ENCODE measurements at regions of chrX and their contacts with region 1.

Region 1: GRCh38 chrX:107627838-107628661 is at the start of gene PRPS1:
- DNase-seq: peak; percentile 75
- H3K4me3 ChIP-seq: peak within 1 kb of the TSS; percentile 81
- H3K27ac ChIP-seq: peak within 1 kb of the TSS; percentile 31
- H3K27me3 ChIP-seq: no peaks in the 10 kb centered on the region
- CTCF ChIP-seq: no peak
- polyA plus RNA-seq, gene PRPS1: 64.2 and 67.9 TPM in 2 replicates

Region 2: GRCh38 chrX:107465932-107466620 is 162.0 kb before region 1 on chrX:
- CTCF ChIA-PET with region 1: no interaction called
- POLR2A ChIA-PET with region 1: no interaction called
- DNase-seq: no peak
- H3K4me3 ChIP-seq: no peak overlapping the region
- H3K27ac ChIP-seq: no peak overlapping the region
- H3K27me3 ChIP-seq: no peaks in the 10 kb centered on the region
- CTCF ChIP-seq: no peak

Region 3: GRCh38 chrX:107537815-107538214 is 90.2 kb before region 1 on chrX:
- CTCF ChIA-PET with region 1: interaction called, 11 read pairs
- POLR2A ChIA-PET with region 1: no interaction called
- DNase-seq: no peak
- H3K4me3 ChIP-seq: no peak overlapping the region
- H3K27ac ChIP-seq: no peak overlapping the region
- H3K27me3 ChIP-seq: no peaks in the 10 kb centered on the region
- CTCF ChIP-seq: peak; percentile 60

Region 4: DNA sequence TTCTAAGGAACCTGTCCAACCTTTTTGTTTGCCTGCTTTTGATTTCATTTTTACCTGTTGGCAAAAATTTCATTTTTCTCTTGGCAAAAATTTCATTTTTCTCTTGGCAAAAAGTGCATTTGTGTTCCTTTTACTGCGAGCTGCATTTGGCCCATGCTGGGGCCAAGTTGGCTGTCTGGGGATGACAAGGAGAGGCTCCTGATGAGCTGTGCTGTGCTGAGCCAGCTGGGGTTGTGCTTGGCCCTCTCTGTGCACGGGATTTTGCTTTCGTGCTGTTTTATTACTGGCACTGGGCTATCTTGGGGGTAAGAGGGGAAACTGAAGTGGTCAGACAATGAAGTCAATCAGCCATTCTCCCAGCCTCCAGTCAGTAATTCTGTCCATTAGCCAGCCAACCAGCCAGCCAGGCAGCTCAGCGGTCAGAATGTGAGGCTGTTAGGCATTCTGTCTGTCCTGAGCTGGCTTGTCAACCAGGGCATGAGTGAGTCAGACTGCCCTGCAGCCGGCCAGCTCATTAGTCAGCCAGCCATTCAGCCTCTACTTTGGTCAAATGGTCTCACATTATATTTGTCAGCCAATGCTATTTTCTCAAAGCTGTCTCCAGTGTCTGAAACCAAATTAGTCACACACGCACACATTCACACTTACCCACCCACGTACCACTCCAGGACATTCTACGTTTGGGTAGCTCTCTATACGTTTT is 56.6 kb before region 1 on chrX:
- CTCF ChIA-PET with region 1: no interaction called
- POLR2A ChIA-PET with region 1: interaction called, 11 read pairs
- DNase-seq: peak; percentile 49
- H3K4me3 ChIP-seq: no peak overlapping the region
- H3K27ac ChIP-seq: peak overlapping the region; percentile 57
- H3K27me3 ChIP-seq: no peaks in the 10 kb centered on the region
- CTCF ChIP-seq: no peak

Measured in AG04450 (cell line).